Left colon (tissue), 2 donors: ENCODE measurements at regions of chr4 and their contacts with region 1.

Region 1: DNA sequence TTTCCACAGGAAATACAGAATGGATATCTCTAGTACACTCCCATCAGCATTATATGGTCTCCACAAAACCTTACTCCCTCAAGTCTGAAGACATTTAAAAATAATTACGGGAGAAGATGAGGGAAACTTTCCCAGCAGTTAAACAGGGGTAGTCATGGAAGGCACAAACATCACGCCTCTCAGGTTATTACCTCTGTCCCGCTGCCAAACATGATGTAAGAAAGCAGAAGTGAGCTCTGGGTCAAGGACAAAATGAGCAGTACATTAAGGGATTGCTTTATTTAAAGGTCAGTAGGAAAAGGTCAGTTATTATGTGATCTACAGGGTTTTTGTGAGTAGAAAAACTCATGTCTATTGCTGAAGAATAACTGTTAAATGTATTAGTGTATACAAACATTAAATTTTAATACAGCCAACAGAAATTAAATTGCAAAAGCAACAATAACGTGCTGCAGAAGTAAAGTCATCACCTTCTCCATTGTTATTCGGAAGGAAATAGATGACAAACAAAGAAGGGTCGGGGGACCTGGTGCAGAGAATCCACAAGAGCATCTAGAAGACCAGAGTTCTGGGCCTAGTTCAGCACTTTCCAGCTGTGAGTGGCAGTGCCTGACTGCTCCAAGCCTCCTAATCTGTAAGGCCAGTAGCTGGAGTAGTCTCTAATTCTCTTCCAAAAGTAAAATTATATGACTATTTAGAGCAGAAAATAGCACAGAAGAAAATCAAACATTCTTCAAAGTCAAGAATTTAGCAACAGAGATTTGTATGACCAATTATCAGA is 171.2 kb downstream of the PPP3CA start:
- DNase-seq: peak; percentile 50 to 61
- ATAC-seq: peak; percentile 99

Region 2: DNA sequence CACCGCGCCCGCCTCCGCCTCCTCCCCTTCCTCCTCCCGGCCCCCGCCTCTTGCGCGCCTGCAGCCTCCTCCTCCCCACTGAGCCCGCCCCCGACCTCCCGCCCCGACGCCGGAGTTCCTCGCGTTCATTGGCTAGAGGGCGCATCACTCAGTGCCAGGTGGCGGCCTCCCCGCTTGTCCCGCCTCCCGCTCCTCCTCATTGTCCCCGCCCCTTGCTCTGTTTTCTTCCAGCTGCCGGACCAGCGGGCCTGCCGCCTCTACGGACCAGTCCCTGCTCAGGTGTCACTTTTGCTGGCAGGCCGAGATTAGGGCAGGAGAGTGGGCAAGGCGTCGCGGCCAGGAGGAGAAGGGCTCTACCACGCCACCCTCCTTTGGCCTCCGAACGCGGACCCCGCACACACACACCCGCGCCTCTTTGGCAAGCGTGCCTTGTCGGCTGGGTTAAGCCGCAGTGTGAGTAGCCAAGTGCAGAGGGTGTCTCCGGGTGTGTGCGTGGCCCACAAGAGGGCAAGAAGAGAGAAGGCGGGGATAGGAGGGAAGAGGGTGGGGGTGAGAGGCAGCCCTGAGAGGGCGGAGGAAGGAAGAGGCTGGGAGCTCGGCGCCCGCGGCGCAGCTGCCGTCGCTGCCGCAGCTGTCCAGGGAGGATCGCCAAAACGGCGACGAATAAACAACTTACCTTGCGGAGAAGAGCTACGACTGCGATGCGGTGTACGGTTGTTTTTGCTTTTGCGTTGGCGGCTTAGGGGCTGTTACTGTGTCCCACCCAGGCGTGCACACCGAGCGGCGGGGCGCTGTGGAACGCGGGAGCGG is 171.7 kb after region 1 on chr4:
- intact Hi-C with region 1: loop called in 1 of 2 experiments (anchors 5 kb)
- DNase-seq: peak; percentile 99
- ATAC-seq: peak; percentile 83